HEK293T (cell line): ENCODE measurements at regions of chr2 and their contacts with region 1.

Region 1: DNA sequence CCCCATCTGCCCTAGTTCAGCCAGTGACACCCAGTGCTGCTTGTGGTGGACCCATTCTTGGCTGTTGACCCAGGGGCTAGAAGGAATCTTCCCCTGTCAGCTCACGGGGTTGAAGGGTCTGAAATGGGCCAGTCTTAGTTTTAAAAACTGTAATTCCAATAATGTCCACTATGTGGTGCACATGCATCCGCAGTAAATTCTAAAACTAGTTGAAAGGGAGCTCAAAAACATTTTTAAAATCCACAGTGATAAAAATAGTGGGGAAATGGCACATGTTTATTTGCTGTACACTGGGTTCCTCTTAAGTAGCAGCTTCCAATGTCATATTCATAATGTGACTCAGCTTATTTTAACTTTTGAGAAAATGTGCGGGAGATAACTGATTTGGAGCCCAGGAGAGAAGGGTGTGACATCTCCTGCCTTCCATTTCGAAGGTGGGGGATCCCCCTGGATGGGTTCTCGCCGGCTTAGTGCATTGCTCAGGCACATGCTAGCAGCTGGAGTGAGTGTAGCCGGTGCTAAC is 32.8 kb downstream of the GRHL1 start:
- DNase-seq: peak; percentile 74

Region 2: DNA sequence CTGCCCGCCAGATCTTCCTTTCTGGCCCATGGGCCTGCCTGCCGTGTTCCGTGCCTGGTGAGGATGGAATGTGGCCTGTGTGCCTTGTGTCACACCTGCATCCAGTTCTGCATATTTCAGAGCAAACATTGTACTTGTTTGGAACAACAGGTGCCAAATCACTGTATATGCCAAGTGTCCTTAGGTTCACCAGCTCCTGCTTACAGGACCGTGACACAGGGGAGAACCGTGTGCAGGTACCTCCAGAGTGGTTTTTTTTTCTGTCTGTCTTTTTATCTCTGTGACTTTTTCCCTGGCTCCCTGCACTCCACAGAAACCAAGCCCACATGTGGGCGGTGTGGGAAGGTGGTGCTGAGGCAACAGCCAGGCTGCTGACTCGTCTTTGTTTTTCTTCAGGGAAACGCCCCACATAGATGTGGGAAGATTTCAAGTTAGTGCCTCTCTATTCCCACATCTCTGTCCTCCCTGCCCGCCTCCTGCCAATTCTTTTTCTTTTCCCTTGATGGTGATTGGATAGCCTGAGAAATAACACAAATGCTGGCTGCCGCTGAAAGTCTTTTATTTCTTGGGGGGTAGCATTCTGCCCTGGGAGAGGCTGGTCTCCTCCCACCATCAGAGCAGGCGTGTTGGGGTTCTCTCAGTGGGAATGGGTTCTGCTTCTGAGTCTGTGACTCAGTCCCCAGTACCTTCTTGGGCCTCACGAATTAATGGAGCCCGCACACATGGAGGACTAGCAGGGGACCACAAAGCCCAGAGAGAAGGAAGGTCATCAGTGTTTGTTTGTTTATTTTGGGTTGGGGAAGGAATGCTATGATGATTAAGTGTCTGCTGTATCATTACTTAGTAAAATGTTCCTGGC is 11.4 kb before region 1 on chr2:
- CTCF ChIA-PET with region 1: interaction called, 13 read pairs
- POLR2A ChIA-PET with region 1: no interaction called
- DNase-seq: no peak

Region 3: DNA sequence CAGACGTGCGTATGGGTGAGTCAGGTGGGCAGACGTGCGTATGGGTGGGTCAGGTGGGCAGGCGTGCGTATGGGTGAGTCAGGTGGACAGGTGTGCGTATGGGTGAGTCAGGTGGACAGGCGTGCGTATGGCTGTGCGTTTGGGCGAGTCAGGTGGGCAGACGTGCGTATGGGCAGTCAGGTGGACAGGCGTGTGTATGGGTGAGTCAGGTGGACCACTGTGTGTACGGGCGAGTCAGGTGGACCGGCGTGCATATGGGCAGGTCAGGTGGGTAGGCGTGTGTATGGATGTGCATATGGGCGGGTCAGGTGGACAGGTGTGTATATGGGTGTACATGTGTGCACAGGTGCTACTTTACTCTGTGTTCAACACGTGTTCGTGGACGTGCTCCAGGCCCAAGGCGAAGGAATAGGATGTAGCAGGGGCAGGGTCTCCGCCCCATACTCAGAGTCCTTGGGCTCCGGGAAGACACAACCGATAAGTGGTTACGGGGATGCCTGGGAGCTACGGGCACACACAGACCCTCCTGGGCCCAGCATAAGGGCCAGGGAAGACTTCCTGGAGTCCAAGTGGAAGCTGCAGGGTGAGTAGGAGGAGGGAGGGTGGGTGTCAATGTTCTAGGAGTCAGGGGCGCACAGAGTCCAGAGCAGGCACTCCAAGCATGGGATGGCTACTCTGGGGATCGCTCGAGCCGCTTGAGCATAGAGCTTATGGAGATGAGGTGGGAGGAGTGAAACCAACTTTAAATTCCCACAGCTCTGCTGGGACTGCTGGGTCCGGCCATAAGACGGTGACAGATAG is 31.9 kb after region 1 on chr2:
- CTCF ChIA-PET with region 1: no interaction called
- POLR2A ChIA-PET with region 1: no interaction called
- DNase-seq: no peak

Region 4: DNA sequence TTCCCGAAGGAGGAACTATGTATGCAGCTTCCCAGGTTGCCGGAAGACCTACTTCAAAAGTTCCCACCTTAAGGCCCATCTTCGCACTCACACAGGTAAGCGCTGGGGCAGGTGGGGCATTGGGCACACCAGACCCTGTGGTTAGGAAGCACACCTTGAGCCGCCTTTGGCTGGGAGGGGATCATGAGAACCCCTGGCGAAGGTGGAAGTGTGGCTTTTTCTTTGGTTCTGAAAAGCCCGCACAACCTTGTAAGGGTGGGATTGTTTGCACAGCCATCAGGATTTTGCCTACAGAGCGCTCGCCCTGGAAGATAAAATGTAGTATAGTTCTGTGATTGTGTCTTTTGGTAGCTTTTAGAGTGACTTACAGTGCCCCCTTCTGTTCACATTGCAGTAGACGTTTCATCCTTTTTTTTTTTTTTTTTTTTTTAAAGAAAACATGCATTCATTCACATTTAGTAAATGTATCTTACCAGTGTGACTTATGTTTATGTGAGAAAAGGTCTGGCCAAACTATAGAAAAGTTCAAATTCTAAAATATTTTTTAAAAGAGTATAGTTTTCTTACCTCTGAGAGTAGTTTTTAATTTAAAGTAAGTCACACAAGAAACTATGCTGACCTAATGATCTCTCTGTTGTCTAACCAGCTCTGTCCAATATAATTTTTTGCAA is 64.4 kb after region 1 on chr2:
- CTCF ChIA-PET with region 1: interaction called, 12 read pairs
- POLR2A ChIA-PET with region 1: no interaction called
- DNase-seq: peak; percentile 45

Region 5: DNA sequence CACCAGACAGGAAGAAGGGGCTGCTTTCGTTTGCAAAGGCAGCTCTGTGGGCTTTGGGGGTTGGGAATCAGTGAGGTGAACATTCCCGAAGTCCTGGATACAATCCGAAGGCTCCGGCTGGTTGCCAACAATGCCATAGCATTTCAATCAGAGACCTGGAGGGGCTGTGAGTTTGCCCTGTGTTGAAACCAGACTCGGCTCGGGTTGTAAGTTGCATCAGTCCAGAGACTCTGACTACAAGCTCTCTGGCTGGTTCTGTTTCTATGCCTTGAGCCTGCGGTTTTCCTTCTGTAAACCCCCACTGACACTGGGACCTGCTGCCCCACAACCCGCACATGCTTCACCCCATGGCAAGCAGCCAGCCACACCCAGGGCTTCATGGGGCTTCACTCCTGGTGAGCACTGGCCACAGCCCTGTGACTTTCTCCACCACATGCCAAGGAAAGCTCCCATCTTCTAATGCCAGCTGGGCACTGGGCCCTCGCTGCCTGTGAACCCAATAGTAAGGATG is 549.6 kb after region 1 on chr2:
- CTCF ChIA-PET with region 1: no interaction called
- POLR2A ChIA-PET with region 1: no interaction called
- DNase-seq: no peak